ENCODE measurements at regions of chr1 and their contacts with region 1.

Region 1: GRCh38 chr1:244451951-244452795 is 464 bp upstream of the ADSS2 start:
- DNase-seq: peak; percentile 99
- H3K4me3 ChIP-seq: peak overlapping the region; percentile 93
- H3K27ac ChIP-seq: peak overlapping the region; percentile 89
- H3K4me1 ChIP-seq: peaks cover 4% of the 10 kb centered on the region
- H3K27me3 ChIP-seq: no peaks in the 10 kb centered on the region
- CTCF ChIP-seq: peak; percentile 31 to 61 (median 51)
- EP300 ChIP-seq: no peak
- POLR2A ChIP-seq: no peak

Region 2: GRCh38 chr1:244047621-244048471 is 404.3 kb before region 1 on chr1:
- intact Hi-C with region 1: loop called in 1 of 4 experiments (anchors 10 kb)
- DNase-seq: peak; percentile 98 to 99 (median 99)
- H3K4me3 ChIP-seq: peak overlapping the region; percentile 94
- H3K27ac ChIP-seq: peak overlapping the region; percentile 91 to 92
- H3K4me1 ChIP-seq: no peaks in the 10 kb centered on the region
- H3K27me3 ChIP-seq: no peaks in the 10 kb centered on the region
- CTCF ChIP-seq: peak in 2 of 3 donors; percentile 11 to 20
- EP300 ChIP-seq: no peak
- POLR2A ChIP-seq: peak; percentile 95

Region 3: DNA sequence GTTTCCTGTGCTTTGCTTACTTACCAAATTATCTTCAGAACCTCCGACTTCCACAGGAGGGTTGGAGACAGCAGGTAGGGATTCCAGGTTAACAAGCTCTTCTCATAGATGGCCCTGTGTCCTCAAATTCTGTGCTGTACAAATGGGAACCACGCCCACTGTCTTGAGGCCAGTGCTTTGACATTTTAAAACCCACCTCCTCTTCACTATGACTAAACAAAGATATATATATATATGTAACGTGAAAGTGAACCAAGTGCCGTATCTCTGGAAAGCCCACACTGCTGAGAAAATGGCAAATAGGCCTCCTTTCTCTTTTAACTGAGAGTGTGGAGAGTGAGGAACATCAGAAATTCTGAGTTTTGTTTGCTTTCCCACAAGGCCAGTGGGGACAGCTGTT is 301.5 kb before region 1 on chr1:
- intact Hi-C with region 1: no loop called
- DNase-seq: no peak
- H3K4me3 ChIP-seq: no peak overlapping the region
- H3K27ac ChIP-seq: no peak overlapping the region
- H3K4me1 ChIP-seq: no peaks in the 10 kb centered on the region
- H3K27me3 ChIP-seq: no peaks in the 10 kb centered on the region
- CTCF ChIP-seq: no peak
- EP300 ChIP-seq: no peak
- POLR2A ChIP-seq: no peak

Region 4: DNA sequence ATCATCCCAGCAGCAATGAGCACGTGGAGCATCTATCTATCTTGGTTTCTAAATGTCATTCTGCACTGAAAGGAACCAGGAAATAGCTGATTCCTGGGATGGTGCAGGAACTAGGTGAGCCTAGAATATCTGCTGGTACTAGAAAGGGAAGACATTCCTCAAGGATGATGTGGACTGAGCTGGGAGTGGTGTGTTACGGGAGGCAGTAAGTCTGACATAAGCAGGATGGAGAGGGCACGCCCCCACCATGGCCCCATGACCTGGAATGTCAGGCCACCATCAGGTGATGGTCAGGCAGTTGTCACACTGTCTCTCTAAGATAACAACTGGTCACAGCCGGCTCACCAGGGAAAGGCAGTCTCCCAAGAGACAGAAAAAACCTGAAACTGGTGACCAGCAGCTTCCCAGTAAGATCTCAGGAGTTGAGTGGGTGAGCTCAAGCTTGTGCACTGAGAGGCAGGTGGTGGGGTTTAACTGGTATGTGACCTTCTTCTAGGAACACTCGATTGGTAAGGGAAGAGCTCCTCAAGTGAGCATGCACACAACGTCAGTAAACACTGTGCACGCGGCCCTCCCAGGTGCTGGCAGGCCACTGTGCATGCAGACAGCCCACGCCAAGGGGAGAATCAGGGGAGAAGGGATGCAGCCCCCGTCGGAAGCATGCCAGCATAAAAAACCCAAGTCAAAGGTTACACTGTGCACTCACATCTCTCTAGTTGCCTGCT is 149.1 kb before region 1 on chr1:
- intact Hi-C with region 1: loop called in 2 of 4 experiments (anchors 5 to 10 kb)
- DNase-seq: peak in 4 of 5 donors; percentile 54 to 68 (median 58)
- H3K4me3 ChIP-seq: no peak overlapping the region
- H3K27ac ChIP-seq: peak overlapping the region in 1 of 2 donors; percentile 51
- H3K4me1 ChIP-seq: peaks cover 29% of the 10 kb centered on the region
- H3K27me3 ChIP-seq: no peaks in the 10 kb centered on the region
- CTCF ChIP-seq: no peak
- EP300 ChIP-seq: no peak
- POLR2A ChIP-seq: no peak

Region 5: DNA sequence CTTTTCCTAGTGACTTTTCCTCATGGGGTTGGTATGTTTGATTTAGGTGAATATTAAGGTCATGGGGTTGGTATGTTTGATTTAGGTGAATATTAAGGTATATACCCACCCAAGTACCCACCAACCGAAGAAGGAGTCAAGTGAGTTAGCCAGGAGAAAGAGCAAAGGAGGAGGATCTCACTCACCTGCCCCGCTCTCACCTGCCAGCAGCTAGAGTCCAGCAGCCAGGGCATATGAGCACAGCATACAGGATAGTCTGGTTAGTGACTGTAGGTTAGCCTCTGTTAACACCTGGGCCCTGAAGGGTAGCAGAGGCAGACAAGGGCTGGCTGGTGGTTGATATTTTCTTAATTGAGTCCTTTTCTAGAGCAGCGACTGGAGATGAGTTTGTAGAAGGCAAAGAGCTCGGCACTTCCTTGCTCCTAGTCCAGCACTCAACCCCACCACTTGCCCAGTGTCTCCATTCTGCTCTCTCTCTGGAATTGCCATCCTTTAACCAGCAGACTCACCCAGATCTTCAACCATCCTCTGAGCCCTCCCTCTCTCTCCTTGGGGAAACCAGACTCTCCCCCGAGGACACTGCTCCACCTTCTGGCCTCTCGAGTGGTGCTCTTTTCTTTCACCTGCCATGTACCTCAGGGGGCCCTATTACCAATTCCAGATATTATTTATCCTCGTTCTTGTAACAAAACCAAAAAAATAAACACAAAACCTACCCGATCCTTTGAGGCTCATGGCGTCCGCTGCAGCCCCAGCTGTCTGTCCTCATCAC is 184.5 kb after region 1 on chr1:
- intact Hi-C with region 1: no loop called
- DNase-seq: no peak
- H3K4me3 ChIP-seq: no peak overlapping the region
- H3K27ac ChIP-seq: no peak overlapping the region
- H3K4me1 ChIP-seq: no peaks in the 10 kb centered on the region
- H3K27me3 ChIP-seq: no peaks in the 10 kb centered on the region
- CTCF ChIP-seq: no peak
- EP300 ChIP-seq: no peak
- POLR2A ChIP-seq: no peak